ENCODE measurements at regions of chr9 and their contacts with region 1.

Region 1: DNA sequence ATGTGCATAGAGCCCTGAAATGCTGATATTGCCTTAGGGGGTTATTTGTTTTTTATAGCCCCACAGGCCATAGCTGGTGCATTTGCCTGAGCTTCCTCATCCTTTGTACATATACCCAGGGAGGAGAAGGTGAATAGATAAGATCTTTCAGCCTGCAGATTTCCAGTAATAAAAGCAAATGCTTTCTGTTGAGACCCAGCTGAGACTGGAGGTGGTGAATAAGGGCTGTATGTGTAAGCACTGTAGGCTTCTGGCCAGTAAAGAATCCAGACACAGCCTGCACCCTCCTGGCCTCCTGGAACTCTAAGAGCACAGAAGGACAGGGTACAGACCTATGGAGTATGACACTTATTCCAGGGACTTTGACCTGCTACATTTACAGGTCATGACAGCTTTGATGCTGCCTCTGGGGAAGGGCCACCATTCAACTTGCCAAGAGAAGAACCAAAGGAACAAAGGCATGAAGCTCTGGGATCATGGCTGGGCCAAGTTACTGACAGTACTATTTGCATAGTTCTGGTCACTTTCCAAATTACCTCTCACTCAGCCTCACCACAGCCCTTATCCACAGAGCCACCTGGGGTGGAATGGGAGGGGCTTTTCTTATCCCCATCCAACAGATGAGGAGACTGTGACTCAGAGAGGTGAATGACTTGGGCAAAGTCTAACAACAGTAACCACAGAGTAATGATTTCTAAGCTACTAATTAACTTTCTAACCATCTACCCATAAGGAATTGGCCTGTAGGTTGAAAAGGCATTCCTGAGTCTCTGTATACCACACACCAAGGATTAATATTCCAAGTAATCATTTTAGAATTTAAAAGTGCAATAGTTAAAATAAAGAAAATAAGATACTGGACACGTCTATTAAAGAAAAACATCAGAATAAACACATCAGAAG is 604.5 kb upstream of the KLF4 start:
- DNase-seq: peak; percentile 89 to 97 (median 91)
- ATAC-seq: peak; percentile 94
- H3K4me3 ChIP-seq: no peak overlapping the region
- H3K27ac ChIP-seq: peak overlapping the region; percentile 94
- H3K4me1 ChIP-seq: peaks cover 15 to 49% of the 10 kb centered on the region in 2 experiments
- H3K27me3 ChIP-seq: no peaks in the 10 kb centered on the region
- CTCF ChIP-seq: no peak
- EP300 ChIP-seq: peak; percentile 100
- POLR2A ChIP-seq: no peak; the same call in 1 of the 2 replicates
- RAD21 ChIP-seq: peak in 1 of 2 experiments; percentile 17; a peak in 1 of 4 replicates

Region 2: GRCh38 chr9:107954312-107954711 is 139.7 kb before region 1 on chr9:
- CTCF ChIA-PET with region 1: no interaction called
- POLR2A ChIA-PET with region 1: no interaction called
- in situ Hi-C with region 1: no loop called
- intact Hi-C with region 1: no loop called
- DNase-seq: no peak
- ATAC-seq: no peak
- H3K4me3 ChIP-seq: no peak overlapping the region
- H3K27ac ChIP-seq: no peak overlapping the region
- H3K4me1 ChIP-seq: no peaks in the 10 kb centered on the region
- H3K27me3 ChIP-seq: peaks cover 0 to 4% of the 10 kb centered on the region in 2 experiments; a peak in 2 of 5 replicates
- CTCF ChIP-seq: no peak
- EP300 ChIP-seq: no peak
- POLR2A ChIP-seq: no peak
- RAD21 ChIP-seq: no peak

Region 3: GRCh38 chr9:108105885-108106284 is 11.9 kb after region 1 on chr9:
- CTCF ChIA-PET with region 1: no interaction called
- POLR2A ChIA-PET with region 1: interaction called, 16 read pairs
- in situ Hi-C with region 1: no loop called
- intact Hi-C with region 1: no loop called
- DNase-seq: peak in 2 of 4 experiments; percentile 24 to 48
- ATAC-seq: peak; percentile 76
- H3K4me3 ChIP-seq: no peak overlapping the region
- H3K27ac ChIP-seq: no peak overlapping the region
- H3K4me1 ChIP-seq: peaks cover 3 to 49% of the 10 kb centered on the region in 2 experiments; a peak in 4 of 5 replicates
- H3K27me3 ChIP-seq: no peaks in the 10 kb centered on the region
- CTCF ChIP-seq: peak; percentile 22 to 64 (median 49)
- EP300 ChIP-seq: no peak
- POLR2A ChIP-seq: no peak
- RAD21 ChIP-seq: no peak

Measured in K562 (cell line).